ENCODE measurements at regions of chr1 and their contacts with region 1.

Region 1: DNA sequence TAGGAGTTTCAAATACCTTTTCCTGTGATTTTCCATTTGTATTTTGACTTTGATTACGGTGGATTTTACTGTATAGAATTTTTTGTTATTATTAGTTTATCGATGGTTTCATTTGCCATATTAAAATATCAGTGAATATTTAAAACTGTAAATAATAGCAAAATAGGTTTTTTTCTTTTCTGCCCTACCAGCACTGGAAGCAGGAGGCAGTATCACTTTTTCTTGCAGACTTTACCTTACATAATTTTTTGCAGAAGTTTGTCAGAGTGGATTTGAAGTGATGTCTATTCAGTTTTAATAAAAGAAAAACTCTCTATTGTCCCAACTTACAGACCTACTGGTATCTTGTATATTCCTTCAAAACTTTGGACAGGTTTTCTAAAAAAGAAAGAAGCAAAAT is 213.6 kb downstream of the CENPF start:
- DNase-seq: no peak
- H3K4me3 ChIP-seq: no peak overlapping the region
- H3K4me3 Mint-ChIP-seq: no peak overlapping the region
- H3K27ac Mint-ChIP-seq: no peak overlapping the region
- H3K4me1 ChIP-seq: no peaks in the 10 kb centered on the region
- H3K4me1 Mint-ChIP-seq: no peaks in the 10 kb centered on the region
- H3K27me3 ChIP-seq: no peaks in the 10 kb centered on the region
- H3K27me3 Mint-ChIP-seq: no peaks in the 10 kb centered on the region
- CTCF ChIP-seq: no peak

Region 2: DNA sequence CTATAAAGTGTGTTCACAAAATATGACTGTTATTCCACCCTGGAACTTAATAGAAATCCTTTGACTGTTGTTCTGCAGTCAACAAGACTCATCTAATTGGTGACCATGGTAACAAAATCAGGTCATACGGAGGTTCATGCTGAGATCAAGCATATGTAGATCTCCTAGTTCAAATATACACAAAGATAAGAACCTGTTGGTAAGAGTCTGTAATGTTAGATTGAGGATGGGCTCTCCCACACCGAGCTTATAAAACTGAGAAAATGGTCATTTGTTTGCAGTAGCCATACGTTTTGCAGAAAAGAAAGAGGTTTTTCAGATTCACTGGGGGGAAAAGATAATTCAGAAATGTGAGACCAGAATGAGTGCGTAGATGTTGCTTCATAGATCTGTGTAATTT is 1297.5 kb before region 1 on chr1:
- CTCF ChIA-PET with region 1: no interaction called
- POLR2A ChIA-PET with region 1: no interaction called
- intact Hi-C with region 1: loop called (anchors 10 kb)
- DNase-seq: no peak
- H3K4me3 ChIP-seq: no peak overlapping the region
- H3K4me3 Mint-ChIP-seq: no peak overlapping the region
- H3K27ac Mint-ChIP-seq: peak overlapping the region; percentile 15
- H3K4me1 ChIP-seq: no peaks in the 10 kb centered on the region
- H3K4me1 Mint-ChIP-seq: peaks cover 13% of the 10 kb centered on the region
- H3K27me3 ChIP-seq: no peaks in the 10 kb centered on the region
- H3K27me3 Mint-ChIP-seq: no peaks in the 10 kb centered on the region
- CTCF ChIP-seq: no peak

Region 3: DNA sequence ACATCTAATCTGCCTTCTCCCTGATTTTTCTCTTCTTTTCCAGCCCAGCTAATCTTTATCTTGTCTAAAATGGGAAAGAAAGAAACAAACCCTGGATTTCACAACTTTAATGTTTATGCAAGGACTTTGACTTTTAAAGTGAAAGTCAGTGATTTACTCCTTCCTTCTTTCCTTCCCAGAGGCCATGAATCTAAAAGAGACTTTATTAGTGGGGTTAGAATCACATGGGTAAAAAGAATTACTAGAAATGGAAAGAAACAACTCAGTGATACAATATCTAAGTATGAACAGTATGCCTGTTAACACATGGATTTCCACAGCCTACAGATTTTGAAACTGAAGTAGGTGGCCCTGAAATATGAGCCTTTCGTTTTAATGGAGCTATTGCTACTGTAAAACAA is 206.1 kb after region 1 on chr1:
- CTCF ChIA-PET with region 1: no interaction called
- POLR2A ChIA-PET with region 1: no interaction called
- intact Hi-C with region 1: no loop called
- DNase-seq: no peak
- H3K4me3 ChIP-seq: no peak overlapping the region
- H3K4me3 Mint-ChIP-seq: no peak overlapping the region
- H3K27ac Mint-ChIP-seq: no peak overlapping the region
- H3K4me1 ChIP-seq: no peaks in the 10 kb centered on the region
- H3K4me1 Mint-ChIP-seq: no peaks in the 10 kb centered on the region
- H3K27me3 ChIP-seq: no peaks in the 10 kb centered on the region
- H3K27me3 Mint-ChIP-seq: peaks cover 4% of the 10 kb centered on the region
- CTCF ChIP-seq: no peak

Measured in Caco-2 (cell line).